ENCODE measurements at regions of chr6 and their contacts with region 1.

Region 1: GRCh38 chr6:108168501-108169463 is 3.0 kb downstream of the NR2E1 start:
- DNase-seq: peak; percentile 33
- H3K4me3 Mint-ChIP-seq: peak overlapping the region; percentile 43
- H3K27ac Mint-ChIP-seq: no peak overlapping the region
- H3K4me1 Mint-ChIP-seq: peaks cover 44% of the 10 kb centered on the region
- H3K27me3 Mint-ChIP-seq: peaks cover 84% of the 10 kb centered on the region

Region 2: DNA sequence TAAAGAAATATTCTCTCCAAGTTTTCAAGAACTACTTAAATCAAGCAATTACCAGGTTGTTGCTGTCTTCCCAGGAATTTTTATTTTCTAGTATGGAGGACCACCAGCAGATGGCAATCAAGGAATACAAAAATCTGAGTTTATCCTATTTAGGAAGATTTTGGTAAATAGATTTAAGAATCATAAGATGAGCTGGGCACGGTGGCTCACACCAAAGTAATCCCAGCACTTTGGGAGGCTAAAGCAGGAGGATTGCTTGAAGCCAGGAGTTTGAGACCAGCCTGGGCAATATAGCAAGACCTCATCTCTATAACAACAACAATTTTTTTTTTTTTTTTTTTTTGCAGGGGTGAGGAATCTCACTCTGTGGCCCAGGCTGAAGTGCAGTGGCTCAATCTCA is 191.5 kb before region 1 on chr6:
- CTCF ChIA-PET with region 1: no interaction called
- intact Hi-C with region 1: loop called (anchors 5 kb)
- DNase-seq: no peak
- H3K4me3 Mint-ChIP-seq: no peak overlapping the region
- H3K27ac Mint-ChIP-seq: no peak overlapping the region
- H3K4me1 Mint-ChIP-seq: no peaks in the 10 kb centered on the region
- H3K27me3 Mint-ChIP-seq: no peaks in the 10 kb centered on the region

Region 3: DNA sequence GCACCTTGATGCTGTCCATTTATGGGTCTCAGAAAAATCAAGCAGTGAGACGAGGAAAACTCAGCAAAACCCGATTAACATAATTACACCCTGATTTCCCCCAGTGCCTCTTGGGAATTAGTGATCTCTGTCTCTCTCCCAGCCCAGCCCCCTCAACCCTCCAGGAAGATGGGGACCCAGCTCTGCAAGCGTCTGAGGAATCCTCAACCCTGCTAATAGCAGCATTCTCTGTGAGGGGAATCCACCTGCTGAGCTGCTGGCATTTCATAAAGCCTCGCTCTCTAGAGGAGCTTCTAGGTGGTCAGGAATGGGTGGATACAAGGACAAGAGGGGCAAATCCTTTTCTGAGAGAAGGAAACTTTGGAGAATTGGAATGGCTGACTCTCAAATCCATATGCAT is 11.0 kb after region 1 on chr6:
- CTCF ChIA-PET with region 1: no interaction called
- intact Hi-C with region 1: no loop called
- DNase-seq: no peak
- H3K4me3 Mint-ChIP-seq: no peak overlapping the region
- H3K27ac Mint-ChIP-seq: no peak overlapping the region
- H3K4me1 Mint-ChIP-seq: peaks cover 14% of the 10 kb centered on the region
- H3K27me3 Mint-ChIP-seq: peaks cover 56% of the 10 kb centered on the region

Measured in activated naive CD4-positive, alpha-beta T cell treated with anti-CD3 and anti-CD28 coated beads for 36 hours (primary cell).